Posterior cingulate gyrus (tissue), 11 donors: ENCODE measurements at regions of chr15 and their contacts with region 1.

Region 1: DNA sequence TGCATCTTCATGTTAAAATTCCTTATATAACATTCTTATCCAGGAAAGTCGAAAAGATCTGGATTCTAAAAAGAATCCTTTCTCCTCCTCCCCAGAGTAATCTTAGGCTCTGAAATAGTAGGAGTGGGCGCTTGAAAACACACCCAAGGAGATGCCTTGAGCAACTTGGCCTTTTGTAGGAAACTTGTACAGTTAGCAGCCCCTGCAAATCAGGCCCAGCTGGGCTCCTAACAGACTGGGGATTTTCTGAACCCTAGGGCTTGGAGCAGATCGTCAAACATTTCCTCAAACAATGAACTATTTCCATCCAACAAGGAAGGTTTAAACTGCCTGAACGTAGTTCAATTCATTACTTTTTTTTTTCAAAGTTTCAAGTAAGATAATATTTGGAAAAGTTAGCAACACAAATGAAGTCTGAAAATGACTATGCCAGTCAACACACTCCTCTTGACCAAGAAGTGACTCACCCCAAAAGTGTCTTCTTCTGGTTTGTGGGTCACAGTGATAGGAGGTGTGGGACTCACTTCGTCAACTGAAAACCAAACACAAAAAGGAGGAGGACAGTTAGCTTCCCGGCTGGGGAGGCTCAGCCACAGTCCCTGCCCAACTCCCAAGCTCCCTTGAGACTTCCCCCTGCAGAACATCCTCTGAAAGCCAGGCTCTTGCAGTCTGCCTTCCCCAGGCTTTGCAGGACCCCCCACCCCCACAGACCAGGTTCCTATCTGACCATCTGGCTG is 129.7 kb downstream of the NTRK3 start:
- DNase-seq: no peak

Region 2: DNA sequence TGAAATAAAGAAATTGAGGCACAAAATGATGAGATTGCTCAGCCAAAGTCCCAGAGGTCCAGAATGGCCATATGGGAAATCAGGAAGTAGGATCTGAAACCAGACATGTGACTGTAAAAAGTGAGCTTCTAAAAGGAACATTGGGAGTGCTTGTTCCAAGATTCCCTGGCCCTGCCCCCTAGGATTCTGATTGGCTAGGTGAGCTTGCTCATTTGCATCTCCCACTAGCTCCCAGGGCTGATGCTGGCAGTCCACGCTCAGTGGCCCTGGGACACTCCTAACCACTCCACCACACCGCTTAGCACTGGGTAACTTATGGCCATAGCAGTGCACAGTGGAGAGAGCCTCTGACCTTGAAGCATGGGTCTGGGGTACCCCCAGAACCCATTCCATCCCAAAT is 197.0 kb before region 1 on chr15:
- intact Hi-C with region 1: no loop called
- DNase-seq: no peak

Region 3: GRCh38 chr15:88166082-88166993 is 39.5 kb after region 1 on chr15:
- intact Hi-C with region 1: no loop called
- DNase-seq: no peak

Region 4: GRCh38 chr15:88447206-88447605 is 320.3 kb after region 1 on chr15:
- intact Hi-C with region 1: loop called (anchors 5 kb)
- DNase-seq: no peak